ENCODE measurements at regions of chr10 and their contacts with region 1.

Region 1: DNA sequence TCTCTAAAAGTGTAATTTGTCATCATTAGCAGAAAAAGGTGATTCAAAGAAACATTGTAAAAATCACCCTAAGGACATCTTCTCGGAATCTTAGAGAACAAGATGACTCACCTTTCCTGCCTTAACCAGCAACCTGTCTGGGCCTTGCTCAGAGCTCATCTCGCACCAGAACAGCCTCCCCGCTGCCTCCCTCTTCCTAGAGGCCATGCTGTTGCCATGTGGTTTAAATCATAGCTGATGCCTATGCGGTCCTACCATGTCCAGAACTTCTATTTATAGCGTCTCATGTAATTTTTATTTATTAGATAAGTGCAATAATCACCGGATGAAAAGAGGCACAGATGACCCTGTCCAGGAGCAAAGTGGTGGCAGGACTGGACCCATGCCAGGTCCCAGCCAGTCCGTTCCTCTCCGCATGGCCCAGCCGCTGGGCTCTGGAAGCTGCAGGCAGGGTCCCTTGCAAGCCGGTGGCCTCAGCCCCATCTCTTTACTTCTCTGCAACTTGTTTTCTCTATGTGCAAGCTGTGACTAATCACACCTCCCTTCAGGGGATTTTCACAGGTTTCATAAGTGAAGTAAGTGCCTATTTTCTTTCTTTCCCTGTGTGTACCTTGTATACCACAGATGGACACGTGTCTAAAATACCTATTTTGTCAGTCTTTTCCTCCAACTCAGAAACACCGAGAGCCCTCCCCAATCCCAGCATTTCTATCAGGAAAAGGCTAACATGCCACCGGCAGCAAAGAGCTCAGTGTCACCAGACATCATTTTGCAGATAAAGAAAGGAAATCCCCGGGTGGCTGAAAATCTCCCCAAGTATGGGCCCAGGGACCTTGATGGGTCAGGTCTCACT is 27.1 kb downstream of the KLF6 start:
- DNase-seq: peak; percentile 35
- H3K4me3 ChIP-seq: no peak overlapping the region
- H3K27ac ChIP-seq: no peak overlapping the region
- H3K4me1 ChIP-seq: peaks cover 15% of the 10 kb centered on the region
- H3K27me3 ChIP-seq: no peaks in the 10 kb centered on the region

Region 2: GRCh38 chr10:3467052-3467951 is 290.6 kb before region 1 on chr10:
- in situ Hi-C with region 1: loop called (anchors 10 kb)
- DNase-seq: peak; percentile 98
- H3K4me3 ChIP-seq: peak overlapping the region; percentile 61
- H3K27ac ChIP-seq: peak overlapping the region; percentile 99
- H3K4me1 ChIP-seq: peaks cover 29% of the 10 kb centered on the region
- H3K27me3 ChIP-seq: no peaks in the 10 kb centered on the region

Region 3: DNA sequence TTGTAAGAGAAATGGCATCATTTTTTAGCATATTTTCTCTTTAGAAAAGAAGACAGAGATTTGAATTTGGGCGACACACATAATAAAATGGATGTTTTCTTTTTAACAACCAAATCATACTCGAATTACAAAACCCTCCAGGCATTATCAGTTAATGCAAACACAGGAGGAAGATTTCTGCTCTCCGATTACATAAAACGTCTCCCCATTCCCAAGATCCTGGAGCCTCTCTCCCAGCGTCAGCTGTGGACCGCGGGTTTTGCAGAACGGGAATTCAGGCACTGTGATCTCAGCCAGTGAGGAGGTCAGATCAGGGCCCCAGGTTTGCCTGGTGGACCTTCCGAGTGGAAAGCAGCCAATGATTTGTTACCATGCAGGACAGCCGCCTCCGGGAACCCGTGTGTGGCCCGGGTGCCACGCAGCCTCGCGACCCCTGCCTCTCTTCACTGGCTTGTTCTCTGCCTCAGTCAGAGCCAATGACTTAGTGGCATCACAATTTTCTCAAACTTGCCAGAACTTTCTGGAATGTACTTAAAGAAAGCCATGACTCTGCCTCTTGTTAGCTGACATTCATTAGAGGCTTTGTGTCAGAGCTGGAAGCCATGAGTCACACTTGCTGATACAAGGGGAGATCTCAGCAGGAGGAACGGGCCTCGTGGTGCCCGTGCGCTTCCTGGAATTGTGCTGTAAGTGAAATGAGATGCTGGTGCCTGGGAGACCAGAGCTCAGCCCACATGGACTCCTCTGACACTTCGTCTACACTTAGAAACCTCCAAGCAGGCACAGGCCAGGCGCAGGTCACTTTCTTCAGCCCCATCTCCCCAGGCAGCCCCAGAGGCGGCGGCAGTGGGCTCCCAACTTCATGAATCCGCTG is 219.0 kb before region 1 on chr10:
- in situ Hi-C with region 1: loop called (anchors 25 kb)
- DNase-seq: peak; percentile 99
- H3K4me3 ChIP-seq: peak overlapping the region; percentile 51
- H3K27ac ChIP-seq: peak overlapping the region; percentile 94
- H3K4me1 ChIP-seq: peaks cover 41% of the 10 kb centered on the region
- H3K27me3 ChIP-seq: no peaks in the 10 kb centered on the region